Mammary epithelial cell (primary cell): ENCODE measurements at regions of chr16 and their contacts with region 1.

Region 1: DNA sequence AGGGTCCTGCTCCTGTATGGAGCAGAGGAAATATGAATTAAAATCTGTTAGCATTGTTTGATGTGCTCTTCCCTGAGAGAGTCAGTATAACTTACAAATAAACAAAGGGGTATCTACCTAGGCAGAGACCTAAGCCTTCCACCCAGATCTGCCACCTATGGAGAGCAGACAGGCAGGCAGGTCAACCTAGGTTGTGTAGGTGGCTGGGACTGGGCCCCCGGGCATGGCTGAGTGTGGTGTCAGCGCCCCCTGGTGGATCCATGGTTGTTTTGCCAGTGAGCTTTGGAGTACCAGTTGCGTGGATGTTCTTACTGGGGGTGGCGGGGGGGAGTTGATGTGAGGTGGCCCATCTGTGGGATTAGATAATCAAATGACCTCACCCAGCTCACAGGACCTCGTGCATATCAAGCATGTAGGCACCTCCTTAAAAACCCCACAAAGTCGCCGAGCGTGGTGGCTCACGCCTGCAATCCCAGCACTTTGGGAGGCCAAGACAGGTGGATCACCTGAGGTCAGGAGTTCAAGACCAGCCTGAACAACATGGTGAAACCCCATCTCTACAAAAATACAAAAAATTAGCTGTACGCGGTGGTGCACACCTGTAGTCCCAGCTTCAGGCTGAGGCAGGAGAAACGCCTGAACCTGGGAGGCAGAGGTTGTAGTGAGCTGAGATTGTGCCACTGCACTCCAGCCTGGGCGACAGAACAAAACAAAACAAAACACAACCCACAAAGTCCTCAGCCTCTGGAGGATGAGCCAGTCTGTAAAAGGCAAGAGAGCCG is 17.6 kb downstream of the DUS2 start:
- DNase-seq: peak; percentile 54
- H3K4me3 ChIP-seq: no peak overlapping the region
- H3K27ac ChIP-seq: no peak overlapping the region
- H3K4me1 ChIP-seq: no peaks in the 10 kb centered on the region
- H3K27me3 ChIP-seq: no peaks in the 10 kb centered on the region
- CTCF ChIP-seq: peak; percentile 80 to 91

Region 2: GRCh38 chr16:67672739-67673662 is 367.7 kb before region 1 on chr16:
- CTCF ChIA-PET with region 1: no interaction called
- dilution Hi-C with region 1: no loop called
- in situ Hi-C with region 1: no loop called
- intact Hi-C with region 1: loop called (anchors 5 kb)
- DNase-seq: peak; percentile 39
- H3K4me3 ChIP-seq: no peak overlapping the region
- H3K27ac ChIP-seq: no peak overlapping the region
- H3K4me1 ChIP-seq: peaks cover 9% of the 10 kb centered on the region
- H3K27me3 ChIP-seq: no peaks in the 10 kb centered on the region
- CTCF ChIP-seq: peak; percentile 79 to 83

Region 3: DNA sequence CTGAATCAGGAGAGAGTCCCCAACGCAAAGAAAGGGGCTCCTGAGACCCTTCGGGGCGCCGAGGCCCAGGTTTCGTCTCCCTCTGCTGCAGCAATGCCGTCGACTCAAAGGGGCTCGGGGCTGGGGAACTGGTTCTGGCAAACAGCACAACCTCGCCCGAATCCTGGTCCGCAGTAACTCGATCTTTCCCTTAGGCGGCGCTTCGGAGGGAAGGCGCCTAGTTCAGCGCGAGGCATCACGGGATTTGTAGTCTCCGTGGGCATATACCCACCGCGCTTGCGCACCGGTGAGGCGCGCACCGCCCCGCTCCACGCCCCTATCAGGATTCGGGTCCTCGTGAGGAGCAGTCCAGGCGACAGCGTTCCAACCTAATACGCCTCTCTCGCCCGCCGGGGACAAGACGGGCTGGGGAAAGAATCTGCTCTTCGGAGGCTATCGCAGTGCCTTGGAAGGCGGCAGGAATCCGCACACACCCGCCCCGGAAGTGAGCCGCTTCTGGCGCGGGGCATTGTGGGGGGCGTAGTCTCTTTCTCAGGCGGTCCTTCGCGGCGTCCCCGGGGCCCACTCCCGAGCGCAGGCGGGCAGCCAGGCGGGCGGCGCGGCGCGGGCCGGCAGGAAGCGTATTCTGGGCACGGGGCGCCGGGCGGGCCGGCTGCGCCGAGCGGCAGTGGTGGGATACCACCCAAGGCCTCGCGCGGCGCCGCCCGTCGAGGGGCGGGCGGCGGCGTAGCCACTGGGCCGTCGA is 198.8 kb before region 1 on chr16 and contains the start of gene THAP11:
- CTCF ChIA-PET with region 1: interaction called, 12 read pairs
- dilution Hi-C with region 1: no loop called
- in situ Hi-C with region 1: no loop called
- intact Hi-C with region 1: no loop called
- DNase-seq: peak; percentile 90
- H3K4me3 ChIP-seq: peak within 1 kb of the TSS; percentile 60 to 80 (median 74)
- H3K27ac ChIP-seq: peak within 1 kb of the TSS; percentile 77
- H3K4me1 ChIP-seq: peaks cover 34% of the 10 kb centered on the region
- H3K27me3 ChIP-seq: no peaks in the 10 kb centered on the region
- CTCF ChIP-seq: peak; percentile 85 to 89
- total RNA-seq, gene THAP11: 11.7 to 13.1 TPM

Region 4: DNA sequence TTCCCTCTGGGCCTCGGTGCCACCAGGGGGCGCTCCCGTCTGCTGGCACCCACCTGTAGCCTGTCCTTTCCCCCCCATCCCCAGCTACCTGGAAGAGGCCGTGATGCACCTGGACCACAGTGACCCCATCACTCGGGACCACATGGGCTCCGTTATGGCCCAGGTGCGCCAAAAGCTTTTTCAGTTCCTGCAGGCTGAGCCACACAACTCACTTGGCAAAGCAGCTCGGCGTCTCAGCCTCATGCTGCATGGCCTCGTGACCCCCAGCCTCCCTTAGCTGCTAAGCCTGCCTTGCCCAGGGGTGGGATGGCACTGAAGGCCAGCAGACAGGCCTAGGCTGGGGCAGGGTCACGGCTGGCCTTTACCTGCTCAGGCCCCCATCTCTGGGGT is 156.8 kb before region 1 on chr16:
- CTCF ChIA-PET with region 1: no interaction called
- dilution Hi-C with region 1: no loop called
- in situ Hi-C with region 1: no loop called
- intact Hi-C with region 1: loop called (anchors 1 kb)
- DNase-seq: peak; percentile 39
- H3K4me3 ChIP-seq: no peak overlapping the region
- H3K27ac ChIP-seq: no peak overlapping the region
- H3K4me1 ChIP-seq: peaks cover 14% of the 10 kb centered on the region
- H3K27me3 ChIP-seq: no peaks in the 10 kb centered on the region
- CTCF ChIP-seq: peak; percentile 75 to 93

Region 5: GRCh38 chr16:67961551-67962534 is 78.9 kb before region 1 on chr16:
- CTCF ChIA-PET with region 1: no interaction called
- dilution Hi-C with region 1: no loop called
- in situ Hi-C with region 1: no loop called
- intact Hi-C with region 1: loop called (anchors 1 kb)
- DNase-seq: peak; percentile 99
- H3K4me3 ChIP-seq: no peak overlapping the region
- H3K27ac ChIP-seq: peak overlapping the region; percentile 8
- H3K4me1 ChIP-seq: peaks cover 55% of the 10 kb centered on the region
- H3K27me3 ChIP-seq: no peaks in the 10 kb centered on the region
- CTCF ChIP-seq: no peak

Region 6: DNA sequence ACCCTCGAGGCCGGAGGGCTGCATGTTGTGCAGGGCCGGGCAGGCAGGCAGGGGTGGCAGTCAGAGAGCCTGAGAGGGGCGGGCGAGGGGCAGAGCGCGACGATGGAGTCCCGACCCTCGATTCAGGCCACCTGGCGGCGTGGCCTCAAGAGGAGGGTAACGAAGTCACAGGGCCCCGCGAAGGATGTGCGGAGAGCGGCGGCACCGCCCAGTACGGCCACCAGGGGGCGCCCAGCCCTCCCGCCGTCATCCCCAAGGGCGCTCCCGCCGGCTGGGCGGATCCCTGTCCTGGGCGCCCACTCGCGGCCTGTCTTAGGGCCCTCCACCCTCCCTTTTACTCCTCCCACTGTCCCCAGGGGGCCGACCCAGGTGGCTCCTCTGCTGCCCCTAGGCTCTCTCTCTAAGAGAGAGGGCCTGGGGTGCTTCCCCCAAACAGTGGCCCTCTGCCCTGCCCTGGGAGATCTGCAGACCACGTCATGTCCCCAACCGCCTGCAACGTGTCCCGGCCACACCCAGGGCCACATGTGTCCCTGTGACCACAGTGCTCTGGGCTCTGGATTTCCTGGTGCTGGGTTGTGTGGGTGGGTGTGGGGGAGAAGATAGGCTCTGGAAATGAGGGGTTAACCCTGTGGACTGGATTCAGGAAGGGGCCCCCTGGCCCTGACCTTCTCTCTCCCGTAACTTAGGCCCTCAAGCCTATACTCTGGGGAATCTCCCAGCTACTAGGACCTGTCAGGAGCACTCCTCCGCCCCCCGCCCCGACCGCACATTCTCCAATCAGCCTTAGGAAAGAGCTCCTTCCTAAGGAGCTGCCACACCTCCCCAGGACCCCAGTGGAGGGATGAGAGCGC is 47.3 kb before region 1 on chr16:
- CTCF ChIA-PET with region 1: no interaction called
- dilution Hi-C with region 1: no loop called
- in situ Hi-C with region 1: loop called in 1 of 2 experiments (anchors 5 kb)
- intact Hi-C with region 1: loop called (anchors 1 kb)
- DNase-seq: peak; percentile 38
- H3K4me3 ChIP-seq: peak overlapping the region in 1 of 3 experiments; percentile 30
- H3K27ac ChIP-seq: no peak overlapping the region
- H3K4me1 ChIP-seq: peaks cover 8% of the 10 kb centered on the region
- H3K27me3 ChIP-seq: no peaks in the 10 kb centered on the region
- CTCF ChIP-seq: peak; percentile 66 to 94